Activated CD4-positive, alpha-beta memory T cell treated with anti-CD3 and anti-CD28 coated beads for 36 hours (primary cell): ENCODE measurements at regions of chr11 and their contacts with region 1.

Region 1: DNA sequence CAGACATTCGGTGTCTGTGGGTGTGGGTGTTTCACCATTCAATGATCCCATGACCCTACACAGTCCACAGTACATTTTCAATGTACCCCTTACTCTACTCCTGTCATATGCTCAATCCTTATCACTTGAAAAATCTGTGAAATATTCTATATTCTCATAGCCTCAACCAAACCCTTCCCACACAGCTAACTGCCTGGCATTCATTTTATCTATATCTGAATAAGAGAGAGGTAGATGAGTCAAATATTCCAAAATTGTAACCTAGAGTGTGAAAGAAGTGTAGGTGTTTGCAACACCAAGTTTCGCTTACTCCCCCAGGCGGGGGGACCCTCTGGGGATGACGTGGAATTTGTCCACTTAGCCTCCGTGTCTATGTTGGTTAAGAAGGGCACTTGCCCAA is 354.8 kb downstream of the ETS1 start:
- DNase-seq: peak; percentile 85
- H3K4me3 Mint-ChIP-seq: no peak overlapping the region
- H3K27ac Mint-ChIP-seq: peak overlapping the region; percentile 69
- H3K4me1 Mint-ChIP-seq: peaks cover 52% of the 10 kb centered on the region
- H3K27me3 Mint-ChIP-seq: no peaks in the 10 kb centered on the region

Region 2: GRCh38 chr11:128052912-128053641 is 179.5 kb before region 1 on chr11:
- CTCF ChIA-PET with region 1: no interaction called
- POLR2A ChIA-PET with region 1: no interaction called
- intact Hi-C with region 1: loop called (anchors 2 kb)
- DNase-seq: no peak
- H3K4me3 Mint-ChIP-seq: peak overlapping the region; percentile 70
- H3K27ac Mint-ChIP-seq: peak overlapping the region; percentile 94
- H3K4me1 Mint-ChIP-seq: peaks cover 67% of the 10 kb centered on the region
- H3K27me3 Mint-ChIP-seq: no peaks in the 10 kb centered on the region

Region 3: GRCh38 chr11:128195057-128195751 is 37.4 kb before region 1 on chr11:
- CTCF ChIA-PET with region 1: interaction called, 6 read pairs
- POLR2A ChIA-PET with region 1: interaction called, 3 read pairs
- intact Hi-C with region 1: loop called (anchors 1 kb)
- DNase-seq: peak; percentile 69
- H3K4me3 Mint-ChIP-seq: no peak overlapping the region
- H3K27ac Mint-ChIP-seq: peak overlapping the region; percentile 2
- H3K4me1 Mint-ChIP-seq: peaks cover 38% of the 10 kb centered on the region
- H3K27me3 Mint-ChIP-seq: no peaks in the 10 kb centered on the region

Region 4: GRCh38 chr11:128284634-128285033 is 52.0 kb after region 1 on chr11:
- CTCF ChIA-PET with region 1: interaction called, 6 read pairs
- POLR2A ChIA-PET with region 1: interaction called, 8 read pairs
- intact Hi-C with region 1: loop called (anchors 1 kb)
- DNase-seq: peak; percentile 44
- H3K4me3 Mint-ChIP-seq: no peak overlapping the region
- H3K27ac Mint-ChIP-seq: peak overlapping the region; percentile 55
- H3K4me1 Mint-ChIP-seq: peaks cover 56% of the 10 kb centered on the region
- H3K27me3 Mint-ChIP-seq: no peaks in the 10 kb centered on the region

Region 5: DNA sequence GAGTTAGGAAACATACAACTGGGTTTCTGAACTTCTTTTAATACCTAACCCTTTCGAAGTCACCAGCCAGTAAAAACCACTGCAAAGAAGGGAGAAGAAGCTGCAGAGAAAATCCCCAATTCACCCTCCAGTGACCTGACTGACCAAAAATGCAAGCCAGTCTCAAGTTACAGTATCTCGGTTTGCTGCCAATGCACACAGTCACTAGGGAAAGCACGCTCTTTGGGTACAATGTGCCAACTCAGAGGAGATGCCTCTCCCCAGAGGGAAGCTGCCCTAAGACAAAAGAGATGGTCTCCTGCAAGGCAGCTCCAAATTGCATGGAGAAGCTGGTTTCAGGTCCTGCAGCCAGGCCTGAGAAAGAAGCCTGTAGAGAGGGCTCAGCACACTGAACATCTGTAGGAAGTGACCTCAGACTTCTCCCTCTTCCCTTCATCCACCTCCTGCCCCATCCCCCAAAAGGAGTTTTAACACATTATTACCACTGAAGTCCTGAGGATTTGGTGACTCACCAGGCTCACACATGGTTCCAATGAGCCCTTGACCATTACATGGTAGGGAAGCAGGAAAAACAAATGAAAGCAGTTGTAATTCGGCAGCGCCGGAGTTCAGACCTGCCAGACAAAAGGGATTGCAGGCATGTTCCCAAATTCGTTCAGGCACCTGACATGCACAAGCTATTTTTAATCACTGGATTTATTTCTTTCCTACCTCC is 264.6 kb after region 1 on chr11:
- CTCF ChIA-PET with region 1: no interaction called
- POLR2A ChIA-PET with region 1: no interaction called
- intact Hi-C with region 1: loop called (anchors 2 kb)
- DNase-seq: peak; percentile 67
- H3K4me3 Mint-ChIP-seq: peak overlapping the region; percentile 71
- H3K27ac Mint-ChIP-seq: peak overlapping the region; percentile 91
- H3K4me1 Mint-ChIP-seq: peaks cover 95% of the 10 kb centered on the region
- H3K27me3 Mint-ChIP-seq: no peaks in the 10 kb centered on the region